ENCODE measurements at regions of chr18 and their contacts with region 1.

Region 1: GRCh38 chr18:63994783-63995399 is 25.0 kb downstream of the SERPINB8 start:
- DNase-seq: no peak
- ATAC-seq: peak in 2 of 4 donors; percentile 44 to 48
- H3K4me3 ChIP-seq: no peak overlapping the region
- H3K27ac ChIP-seq: no peak overlapping the region
- H3K4me1 ChIP-seq: no peaks in the 10 kb centered on the region
- H3K27me3 ChIP-seq: no peaks in the 10 kb centered on the region
- CTCF ChIP-seq: peak; percentile 69

Region 2: GRCh38 chr18:63523660-63524059 is 471.2 kb before region 1 on chr18:
- intact Hi-C with region 1: loop called (anchors 5 to 10 kb)
- DNase-seq: no peak
- ATAC-seq: no peak
- H3K4me3 ChIP-seq: no peak overlapping the region
- H3K27ac ChIP-seq: no peak overlapping the region
- H3K4me1 ChIP-seq: no peaks in the 10 kb centered on the region
- H3K27me3 ChIP-seq: no peaks in the 10 kb centered on the region
- CTCF ChIP-seq: no peak

Region 3: DNA sequence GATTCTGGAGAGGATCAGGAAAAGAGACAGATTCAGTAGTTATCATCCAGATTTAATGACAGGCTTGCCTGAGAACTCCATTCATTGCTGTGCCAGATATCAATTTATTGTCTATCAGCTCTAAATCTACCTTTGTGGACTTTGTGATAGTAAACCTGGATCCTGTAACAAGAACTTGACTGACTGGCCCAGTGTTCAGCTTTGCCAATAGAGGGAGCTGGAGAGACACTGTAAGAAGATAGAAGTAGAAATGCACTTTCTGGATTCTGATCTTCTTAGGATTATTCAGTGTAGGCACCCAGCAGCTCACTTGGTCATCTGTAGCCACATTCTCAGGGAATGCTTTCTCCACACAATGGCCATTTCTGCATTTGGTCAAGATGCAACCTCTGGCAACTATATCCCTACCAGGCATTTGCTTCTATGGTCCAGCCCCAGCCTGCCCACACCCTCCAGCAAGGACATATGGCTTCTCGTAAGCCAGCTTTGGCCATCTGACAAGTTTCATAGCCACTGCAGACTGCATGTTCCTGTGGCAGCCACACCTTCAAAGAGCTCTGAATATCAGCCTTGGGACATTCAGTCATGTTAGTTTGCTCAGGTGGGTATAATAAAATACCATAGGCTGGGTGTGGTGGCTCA is 31.2 kb before region 1 on chr18:
- intact Hi-C with region 1: loop called in 1 of 2 experiments (anchors 5 kb)
- DNase-seq: peak in 1 of 2 donors; percentile 18
- ATAC-seq: peak in 3 of 4 donors; percentile 52 to 68 (median 57)
- H3K4me3 ChIP-seq: no peak overlapping the region
- H3K27ac ChIP-seq: no peak overlapping the region
- H3K4me1 ChIP-seq: no peaks in the 10 kb centered on the region
- H3K27me3 ChIP-seq: peaks cover 0 to 4% (median 2%) of the 10 kb centered on the region in 3 donors
- CTCF ChIP-seq: peak; percentile 59

Region 4: DNA sequence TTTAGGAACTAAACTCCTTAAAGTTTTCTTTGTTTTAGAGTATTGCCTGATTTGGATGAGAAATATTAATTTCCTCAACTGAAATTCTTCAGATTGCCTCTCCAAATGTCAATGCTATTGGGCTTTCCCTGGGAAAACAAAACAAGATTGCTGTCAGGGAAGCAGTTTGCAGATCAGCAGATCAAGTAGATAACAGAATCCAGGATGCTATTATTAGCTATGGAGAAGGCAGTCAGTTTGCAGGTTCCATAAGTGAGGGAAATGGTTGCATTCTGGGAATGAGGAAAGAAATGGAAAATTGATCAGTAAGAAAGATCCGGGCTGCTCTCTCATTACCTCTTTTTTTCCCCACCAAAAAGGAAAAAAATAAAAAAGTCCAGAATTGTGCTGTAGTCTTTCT is 143.0 kb after region 1 on chr18:
- intact Hi-C with region 1: no loop called
- DNase-seq: no peak
- ATAC-seq: no peak
- H3K4me3 ChIP-seq: no peak overlapping the region
- H3K27ac ChIP-seq: no peak overlapping the region
- H3K4me1 ChIP-seq: no peaks in the 10 kb centered on the region
- H3K27me3 ChIP-seq: no peaks in the 10 kb centered on the region
- CTCF ChIP-seq: no peak

Measured in psoas muscle (tissue), 8 donors.